ENCODE measurements at regions of chr2 and their contacts with region 1.

Region 1: GRCh38 chr2:49236316-49236715 is 82.0 kb upstream of the FSHR start:
- DNase-seq: no peak
- H3K4me3 Mint-ChIP-seq: no peak overlapping the region
- H3K27ac Mint-ChIP-seq: no peak overlapping the region
- H3K4me1 Mint-ChIP-seq: no peaks in the 10 kb centered on the region
- H3K27me3 Mint-ChIP-seq: no peaks in the 10 kb centered on the region

Region 2: DNA sequence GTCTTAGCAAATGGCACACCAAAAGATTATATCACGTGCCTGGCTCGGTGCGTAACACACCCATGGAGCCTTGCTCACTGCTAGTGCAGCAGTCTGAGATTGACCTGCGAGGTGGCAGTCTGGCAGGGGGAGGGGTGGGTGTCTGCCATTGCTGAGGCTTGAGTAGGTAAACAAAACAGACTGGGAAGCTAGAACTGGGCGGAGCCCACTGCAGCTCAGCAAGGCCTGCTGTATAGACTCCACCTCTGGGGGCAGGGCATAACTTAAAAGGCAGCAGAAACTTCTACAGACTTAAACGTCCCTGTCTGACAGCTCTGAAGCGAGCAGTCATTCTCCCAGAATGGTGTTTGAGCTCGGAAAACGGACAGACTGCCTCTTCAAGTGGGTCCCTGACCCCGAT is 26.1 kb before region 1 on chr2:
- CTCF ChIA-PET with region 1: no interaction called
- intact Hi-C with region 1: loop called (anchors 1 kb)
- DNase-seq: no peak
- H3K4me3 Mint-ChIP-seq: no peak overlapping the region
- H3K27ac Mint-ChIP-seq: no peak overlapping the region
- H3K4me1 Mint-ChIP-seq: no peaks in the 10 kb centered on the region
- H3K27me3 Mint-ChIP-seq: no peaks in the 10 kb centered on the region